SK-N-SH (cell line): ENCODE measurements at regions of chr10 and their contacts with region 1.

Region 1: DNA sequence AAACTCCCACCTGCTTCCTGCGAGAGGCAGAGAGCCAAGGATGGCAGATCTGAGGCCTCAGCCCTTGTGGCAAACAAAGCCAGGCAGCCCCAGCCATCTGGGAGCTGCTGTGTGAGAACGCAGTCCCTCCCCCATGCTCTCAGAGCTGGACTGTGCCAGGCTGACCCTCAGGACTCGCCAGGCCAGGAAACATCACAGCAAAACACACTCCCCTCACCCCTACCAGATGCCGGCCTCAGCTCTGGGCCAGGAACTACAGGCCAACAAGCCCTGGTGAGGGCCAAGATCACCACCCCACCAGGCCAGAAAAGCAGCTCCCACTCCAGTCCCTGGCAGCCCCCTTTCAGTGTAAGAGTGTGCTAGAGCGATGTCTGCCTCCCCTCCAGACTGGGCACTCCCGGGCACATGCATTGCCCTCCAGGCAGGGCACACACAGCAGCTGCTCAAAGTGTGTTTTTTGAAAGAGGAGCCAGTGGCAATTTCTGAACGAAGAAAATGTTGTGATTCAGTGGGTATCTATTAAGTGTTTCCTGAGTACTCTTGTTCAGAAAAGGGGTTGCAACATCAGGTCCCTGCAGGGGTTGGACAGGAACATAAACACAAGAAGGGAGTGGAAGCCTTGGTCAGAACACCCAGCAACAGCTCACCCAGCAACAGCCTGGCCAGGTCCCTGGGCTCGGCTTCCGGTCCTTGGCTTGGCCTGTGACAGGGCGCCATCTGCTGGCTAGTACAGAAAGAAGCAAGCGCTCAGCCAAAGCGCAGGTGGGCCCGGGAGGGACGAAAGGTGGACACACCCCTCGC is 18.3 kb downstream of the LRRC20 start:
- DNase-seq: peak; percentile 88
- H3K4me3 ChIP-seq: peak overlapping the region in 1 of 2 experiments; percentile 14; a peak in 1 of 4 replicates
- H3K27ac ChIP-seq: peak overlapping the region; percentile 60 to 96
- H3K4me1 ChIP-seq: peaks cover 6 to 15% of the 10 kb centered on the region in 2 experiments; a peak in 3 of 4 replicates
- H3K27me3 ChIP-seq: no peaks in the 10 kb centered on the region
- CTCF ChIP-seq: peak; percentile 92
- EP300 ChIP-seq: peak; percentile 6 to 77; a peak in 2 of 4 replicates
- RAD21 ChIP-seq: peak; percentile 99

Region 2: GRCh38 chr10:70063418-70064098 is 300.6 kb before region 1 on chr10:
- CTCF ChIA-PET with region 1: no interaction called
- POLR2A ChIA-PET with region 1: no interaction called
- DNase-seq: no peak
- H3K4me3 ChIP-seq: no peak overlapping the region
- H3K27ac ChIP-seq: no peak overlapping the region
- H3K4me1 ChIP-seq: peaks cover 0 to 2% of the 10 kb centered on the region in 2 experiments; a peak in 2 of 4 replicates
- H3K27me3 ChIP-seq: no peaks in the 10 kb centered on the region
- CTCF ChIP-seq: no peak
- EP300 ChIP-seq: no peak
- RAD21 ChIP-seq: no peak

Region 3: GRCh38 chr10:70115948-70116682 is 248.1 kb before region 1 on chr10:
- CTCF ChIA-PET with region 1: interaction called, 12 read pairs
- POLR2A ChIA-PET with region 1: no interaction called
- DNase-seq: peak; percentile 80
- H3K4me3 ChIP-seq: no peak overlapping the region
- H3K27ac ChIP-seq: no peak overlapping the region
- H3K4me1 ChIP-seq: peaks cover 0 to 3% of the 10 kb centered on the region in 2 experiments; a peak in 1 of 4 replicates
- H3K27me3 ChIP-seq: no peaks in the 10 kb centered on the region
- CTCF ChIP-seq: peak; percentile 93
- EP300 ChIP-seq: no peak
- RAD21 ChIP-seq: peak; percentile 51

Region 4: DNA sequence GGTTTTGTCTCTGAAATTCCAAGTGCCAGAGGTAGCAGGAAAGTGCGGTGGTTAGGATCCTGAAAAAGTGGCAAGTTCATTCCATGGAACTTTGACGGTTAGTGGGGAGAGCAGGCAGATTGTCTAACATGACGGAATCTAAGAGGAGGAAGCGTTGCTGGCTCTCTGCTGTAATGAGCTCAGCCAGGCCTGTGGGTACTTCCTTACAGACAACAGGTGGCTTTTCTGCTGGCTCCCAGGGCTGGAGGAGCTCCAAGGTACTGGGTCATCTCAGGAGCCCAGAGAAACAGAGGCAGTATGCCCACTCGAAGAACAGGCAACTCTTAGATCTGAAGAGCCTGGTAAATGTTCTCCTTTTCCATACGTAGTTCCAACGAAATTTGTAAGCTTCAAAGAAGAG is 228.5 kb before region 1 on chr10:
- CTCF ChIA-PET with region 1: no interaction called
- POLR2A ChIA-PET with region 1: no interaction called
- DNase-seq: no peak
- H3K4me3 ChIP-seq: no peak overlapping the region
- H3K27ac ChIP-seq: no peak overlapping the region
- H3K4me1 ChIP-seq: peaks cover 0 to 5% of the 10 kb centered on the region in 2 experiments; a peak in 1 of 4 replicates
- H3K27me3 ChIP-seq: no peaks in the 10 kb centered on the region
- CTCF ChIP-seq: no peak
- EP300 ChIP-seq: no peak
- RAD21 ChIP-seq: no peak

Region 5: DNA sequence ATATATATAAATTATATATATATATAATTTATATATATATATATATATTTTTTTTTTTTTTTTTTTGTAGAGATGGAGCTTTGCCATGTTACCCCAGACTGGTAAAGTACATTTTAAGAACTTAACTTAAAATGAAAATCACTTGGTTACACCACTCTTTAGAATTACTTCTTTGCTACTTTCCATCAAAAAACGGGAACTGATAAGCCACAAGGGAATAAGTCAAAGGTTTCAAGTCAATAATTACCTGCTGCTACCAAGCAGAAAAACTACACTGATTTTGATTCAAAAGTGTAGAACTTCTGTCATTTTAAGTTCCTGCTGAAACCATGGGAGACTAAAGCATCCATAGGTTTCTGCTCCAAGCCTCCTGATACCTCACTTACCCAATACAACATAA is 143.1 kb before region 1 on chr10:
- CTCF ChIA-PET with region 1: interaction called, 214 read pairs
- POLR2A ChIA-PET with region 1: interaction called, 26 read pairs
- DNase-seq: no peak
- H3K4me3 ChIP-seq: no peak overlapping the region
- H3K27ac ChIP-seq: peak overlapping the region in 1 of 2 experiments; percentile 45; a peak in 3 of 4 replicates
- H3K4me1 ChIP-seq: peaks cover 0 to 4% of the 10 kb centered on the region in 2 experiments; a peak in 2 of 4 replicates
- H3K27me3 ChIP-seq: no peaks in the 10 kb centered on the region
- CTCF ChIP-seq: no peak
- EP300 ChIP-seq: no peak
- RAD21 ChIP-seq: no peak

Region 6: GRCh38 chr10:70267161-70267933 is 96.8 kb before region 1 on chr10:
- CTCF ChIA-PET with region 1: interaction called, 32 read pairs
- POLR2A ChIA-PET with region 1: interaction called, 5 read pairs
- DNase-seq: no peak
- H3K4me3 ChIP-seq: no peak overlapping the region
- H3K27ac ChIP-seq: peak overlapping the region in 1 of 2 experiments; percentile 40; a peak in 2 of 4 replicates
- H3K4me1 ChIP-seq: peaks cover 0 to 3% of the 10 kb centered on the region in 2 experiments; a peak in 1 of 4 replicates
- H3K27me3 ChIP-seq: no peaks in the 10 kb centered on the region
- CTCF ChIP-seq: peak; percentile 53
- EP300 ChIP-seq: 0 out of 4 replicates have a peak, but pooled peaks of 1 of the 2 experiments have one; percentile 24
- RAD21 ChIP-seq: no peak

Region 7: GRCh38 chr10:70289739-70290138 is 74.4 kb before region 1 on chr10:
- CTCF ChIA-PET with region 1: interaction called, 27 read pairs
- POLR2A ChIA-PET with region 1: no interaction called
- DNase-seq: no peak
- H3K4me3 ChIP-seq: no peak overlapping the region
- H3K27ac ChIP-seq: no peak overlapping the region
- H3K4me1 ChIP-seq: no peaks in the 10 kb centered on the region
- H3K27me3 ChIP-seq: peaks cover 1% of the 10 kb centered on the region
- CTCF ChIP-seq: no peak
- EP300 ChIP-seq: no peak
- RAD21 ChIP-seq: no peak

Region 8: DNA sequence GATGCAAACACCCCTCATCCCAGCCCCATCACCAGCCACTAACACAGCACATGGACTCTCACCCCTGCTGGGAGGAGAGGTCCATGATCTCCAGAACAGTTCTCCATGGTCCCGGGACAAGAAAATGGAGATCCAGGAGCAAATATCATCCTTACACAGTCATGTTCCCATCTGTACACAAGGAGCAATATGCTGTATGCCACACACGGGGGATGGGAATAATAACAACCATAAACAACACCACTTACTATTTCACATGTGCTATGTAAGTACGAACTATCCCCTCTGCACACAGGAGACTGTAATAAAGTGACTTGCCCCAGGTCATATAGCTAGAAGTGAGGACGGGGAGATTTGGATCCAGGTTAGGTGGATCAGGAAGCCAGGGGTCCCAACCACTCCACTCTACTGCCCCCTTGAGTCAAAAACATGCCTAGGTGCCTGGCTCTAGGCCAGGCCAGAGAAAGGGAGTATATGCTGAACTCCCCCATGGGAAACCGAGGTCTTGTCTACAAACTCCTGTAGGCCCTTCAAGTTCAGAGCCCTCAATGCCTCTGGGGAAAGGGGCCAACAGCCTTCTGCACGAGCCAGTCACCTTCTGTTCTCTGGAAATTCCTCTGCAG is 15.8 kb before region 1 on chr10:
- CTCF ChIA-PET with region 1: interaction called, 40 read pairs
- POLR2A ChIA-PET with region 1: no interaction called
- DNase-seq: peak; percentile 60
- H3K4me3 ChIP-seq: no peak overlapping the region
- H3K27ac ChIP-seq: no peak overlapping the region
- H3K4me1 ChIP-seq: peaks cover 0 to 10% of the 10 kb centered on the region in 2 experiments; a peak in 3 of 4 replicates
- H3K27me3 ChIP-seq: no peaks in the 10 kb centered on the region
- CTCF ChIP-seq: peak; percentile 68
- EP300 ChIP-seq: no peak
- RAD21 ChIP-seq: peak; percentile 70